BJ (cell line): ENCODE measurements at regions of chr1 and their contacts with region 1.

Region 1: GRCh38 chr1:206912445-206913095 is 9.2 kb downstream of the FCMR start:
- DNase-seq: no peak
- H3K4me3 ChIP-seq: no peak overlapping the region
- H3K27me3 ChIP-seq: peaks cover 4% of the 10 kb centered on the region
- CTCF ChIP-seq: peak; percentile 78

Region 2: GRCh38 chr1:206635080-206635977 is 277.2 kb before region 1 on chr1 and contains the start of gene DYRK3:
- CTCF ChIA-PET with region 1: interaction called, 26 read pairs
- POLR2A ChIA-PET with region 1: no interaction called
- DNase-seq: peak; percentile 46
- H3K4me3 ChIP-seq: peak within 1 kb of the TSS; percentile 83
- H3K27me3 ChIP-seq: no peaks in the 10 kb centered on the region
- CTCF ChIP-seq: 0 out of 2 replicates have a peak, but pooled peaks have one; percentile 13
- polyA plus RNA-seq, gene DYRK3: 7.4 and 10.8 TPM in 2 replicates

Region 3: DNA sequence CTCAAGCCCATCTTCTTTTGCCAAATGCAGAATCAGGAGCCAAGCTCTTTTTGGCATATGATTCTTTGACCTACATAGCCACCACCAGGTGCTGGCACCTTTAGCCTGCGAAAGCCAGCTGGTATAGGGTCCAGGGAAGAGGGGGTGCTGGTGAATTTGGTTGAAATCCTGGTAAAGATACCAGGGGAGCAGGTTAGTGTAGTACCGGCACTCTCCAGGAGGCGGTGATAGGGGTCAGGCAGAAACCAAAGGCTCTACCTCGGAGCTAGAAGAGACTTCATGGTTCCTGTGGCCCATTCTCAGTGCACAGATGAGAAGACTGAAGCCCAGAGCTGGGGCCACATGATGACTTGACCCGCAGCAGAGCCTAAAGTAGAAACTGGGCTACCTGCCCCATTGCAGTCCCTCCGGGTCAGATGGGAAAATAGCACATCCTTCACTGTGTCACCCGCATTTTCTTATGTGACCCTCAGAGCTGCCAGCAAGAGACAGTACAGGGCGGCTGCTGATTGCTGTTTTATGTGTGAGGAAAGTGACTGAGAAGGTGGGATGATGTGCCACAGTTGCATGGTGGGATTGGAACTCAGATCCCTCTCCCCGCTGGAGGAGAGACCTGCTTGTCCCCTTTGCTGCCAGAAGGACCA is 177.9 kb before region 1 on chr1:
- CTCF ChIA-PET with region 1: interaction called, 56 read pairs
- POLR2A ChIA-PET with region 1: no interaction called
- DNase-seq: no peak
- H3K4me3 ChIP-seq: no peak overlapping the region
- H3K27me3 ChIP-seq: no peaks in the 10 kb centered on the region
- CTCF ChIP-seq: peak; percentile 88

Region 4: GRCh38 chr1:206784471-206784903 is 128.1 kb before region 1 on chr1:
- CTCF ChIA-PET with region 1: no interaction called
- POLR2A ChIA-PET with region 1: no interaction called
- DNase-seq: no peak
- H3K4me3 ChIP-seq: no peak overlapping the region
- H3K27me3 ChIP-seq: no peaks in the 10 kb centered on the region; the same call in 1 of the 2 replicates
- CTCF ChIP-seq: no peak

Region 5: GRCh38 chr1:206808615-206809014 is 104.0 kb before region 1 on chr1:
- CTCF ChIA-PET with region 1: interaction called, 127 read pairs
- POLR2A ChIA-PET with region 1: no interaction called
- DNase-seq: no peak
- H3K4me3 ChIP-seq: no peak overlapping the region
- H3K27me3 ChIP-seq: 0 out of 2 replicates have a peak, but pooled peaks cover 1% of the 10 kb centered on the region
- CTCF ChIP-seq: peak; percentile 49

Region 6: DNA sequence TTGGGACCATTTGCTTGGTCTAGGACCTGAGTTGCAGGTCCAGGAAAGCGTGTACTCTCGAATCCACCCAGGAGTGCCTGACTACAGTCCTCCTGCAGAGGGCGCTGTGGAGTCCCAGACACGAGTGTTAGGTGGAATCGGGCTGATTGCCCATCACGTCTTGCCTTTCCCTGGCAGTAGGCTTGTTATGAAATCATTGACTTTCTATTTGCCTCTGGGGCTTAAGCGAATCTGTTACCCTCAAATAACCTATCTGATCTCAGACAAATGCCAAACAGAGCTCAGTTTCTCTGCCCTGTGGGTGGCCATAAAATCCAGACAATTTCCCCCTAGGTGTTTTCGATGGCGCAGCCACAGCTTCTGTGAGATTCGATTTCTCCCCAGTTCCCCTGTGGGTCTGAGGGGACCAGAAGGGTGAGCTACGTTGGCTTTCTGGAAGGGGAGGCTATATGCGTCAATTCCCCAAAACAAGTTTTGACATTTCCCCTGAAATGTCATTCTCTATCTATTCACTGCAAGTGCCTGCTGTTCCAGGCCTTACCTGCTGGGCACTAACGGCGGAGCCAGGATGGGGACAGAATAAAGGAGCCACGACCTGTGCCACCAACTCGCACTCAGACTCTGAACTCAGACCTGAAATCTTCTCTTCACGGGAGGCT is 47.4 kb before region 1 on chr1 and contains the start of gene IL20:
- CTCF ChIA-PET with region 1: interaction called, 44 read pairs
- POLR2A ChIA-PET with region 1: no interaction called
- DNase-seq: no peak
- H3K4me3 ChIP-seq: no peak within 1 kb of the TSS
- H3K27me3 ChIP-seq: peaks cover 7% of the 10 kb centered on the region; the same call in 1 of the 2 replicates
- CTCF ChIP-seq: peak; percentile 92
- polyA plus RNA-seq, gene IL20: not detected in 2 replicates

Region 7: GRCh38 chr1:206925106-206925736 is 12.7 kb after region 1 on chr1:
- CTCF ChIA-PET with region 1: interaction called, 28 read pairs
- POLR2A ChIA-PET with region 1: no interaction called
- DNase-seq: no peak
- H3K4me3 ChIP-seq: no peak overlapping the region
- H3K27me3 ChIP-seq: no peaks in the 10 kb centered on the region; the same call in 1 of the 2 replicates
- CTCF ChIP-seq: no peak

Region 8: GRCh38 chr1:206992790-206993189 is 80.2 kb after region 1 on chr1:
- CTCF ChIA-PET with region 1: no interaction called
- POLR2A ChIA-PET with region 1: no interaction called
- DNase-seq: no peak
- H3K4me3 ChIP-seq: no peak overlapping the region
- H3K27me3 ChIP-seq: peaks cover 10% of the 10 kb centered on the region
- CTCF ChIP-seq: no peak